Gastrocnemius medialis (tissue), 4 donors: ENCODE measurements at regions of chr21 and their contacts with region 1.

Region 1: GRCh38 chr21:42818328-42818749 is 61.0 kb downstream of the WDR4 start:
- DNase-seq: peak in 1 of 2 donors; percentile 37
- ATAC-seq: no peak
- H3K4me3 ChIP-seq: no peak overlapping the region
- H3K27ac ChIP-seq: no peak overlapping the region
- H3K4me1 ChIP-seq: no peaks in the 10 kb centered on the region
- H3K27me3 ChIP-seq: peaks cover 0 to 4% (median 0%) of the 10 kb centered on the region in 3 donors
- CTCF ChIP-seq: peak; percentile 49 to 76 (median 69)
- POLR2A ChIP-seq: no peak

Region 2: GRCh38 chr21:42309753-42310221 is 508.6 kb before region 1 on chr21:
- in situ Hi-C with region 1: loop called in 1 of 4 experiments (anchors 25 kb)
- intact Hi-C with region 1: no loop called
- DNase-seq: no peak
- ATAC-seq: peak; percentile 37 to 62
- H3K4me3 ChIP-seq: no peak overlapping the region
- H3K27ac ChIP-seq: no peak overlapping the region
- H3K4me1 ChIP-seq: peaks cover 0 to 5% of the 10 kb centered on the region in 2 donors
- H3K27me3 ChIP-seq: peaks cover 0 to 21% (median 9%) of the 10 kb centered on the region in 3 donors
- CTCF ChIP-seq: peak; percentile 54 to 82 (median 63)
- POLR2A ChIP-seq: no peak

Region 3: GRCh38 chr21:42593007-42593806 is 225.1 kb before region 1 on chr21:
- in situ Hi-C with region 1: loop called in 2 of 4 experiments (anchors 5 to 25 kb)
- intact Hi-C with region 1: no loop called
- DNase-seq: peak; percentile 17 to 28
- ATAC-seq: peak in 1 of 2 donors; percentile 42
- H3K4me3 ChIP-seq: peak overlapping the region in 2 of 4 donors; percentile 9 to 36
- H3K27ac ChIP-seq: no peak overlapping the region
- H3K4me1 ChIP-seq: no peaks in the 10 kb centered on the region
- H3K27me3 ChIP-seq: peaks cover 0 to 18% (median 7%) of the 10 kb centered on the region in 3 donors
- CTCF ChIP-seq: peak in 4 of 5 experiments; percentile 26 to 64 (median 53)
- POLR2A ChIP-seq: no peak

Region 4: GRCh38 chr21:42614811-42615659 is 203.3 kb before region 1 on chr21:
- in situ Hi-C with region 1: loop called in 1 of 4 experiments (anchors 25 kb)
- intact Hi-C with region 1: no loop called
- DNase-seq: no peak
- ATAC-seq: no peak
- H3K4me3 ChIP-seq: no peak overlapping the region
- H3K27ac ChIP-seq: no peak overlapping the region
- H3K4me1 ChIP-seq: no peaks in the 10 kb centered on the region
- H3K27me3 ChIP-seq: peaks cover 26 to 32% (median 30%) of the 10 kb centered on the region in 3 donors
- CTCF ChIP-seq: no peak
- POLR2A ChIP-seq: no peak

Region 5: DNA sequence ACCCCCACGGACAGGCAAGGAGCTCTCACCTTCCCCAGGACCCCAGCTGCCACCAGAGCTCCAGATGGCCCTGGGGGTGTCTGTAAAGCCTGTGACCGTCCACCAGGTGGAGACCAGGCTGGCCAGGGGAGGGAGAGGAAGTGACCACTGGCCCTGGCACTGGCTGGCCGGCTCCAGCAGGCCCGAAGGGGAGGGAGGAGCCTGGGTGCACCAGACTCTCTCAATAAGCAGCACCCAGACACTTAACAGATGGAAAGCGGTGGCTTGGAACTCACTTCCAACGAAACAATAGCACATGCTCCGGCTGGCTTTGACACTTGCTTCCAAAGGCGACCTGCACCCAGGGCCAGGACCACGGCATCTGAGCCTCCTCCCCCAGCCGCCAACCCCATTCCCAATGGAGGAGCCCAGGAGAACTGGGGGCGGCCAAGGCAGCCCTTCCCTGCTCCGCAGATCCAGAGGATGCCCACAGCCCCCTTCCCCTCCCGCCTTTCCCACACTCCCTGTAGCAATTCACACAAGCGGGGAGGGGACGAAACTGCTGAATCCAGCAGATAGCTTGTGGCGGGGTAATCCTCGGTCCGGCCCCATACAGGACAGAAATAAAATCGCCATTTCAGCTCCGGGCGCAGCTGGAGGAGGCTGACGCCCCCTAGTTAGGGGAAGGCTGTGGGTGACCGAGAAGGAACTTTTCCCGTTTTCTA is 165.7 kb before region 1 on chr21:
- in situ Hi-C with region 1: no loop called
- intact Hi-C with region 1: loop called (anchors 2 kb)
- DNase-seq: peak; percentile 25 to 41
- ATAC-seq: peak; percentile 41 to 55
- H3K4me3 ChIP-seq: peak overlapping the region; percentile 42 to 65 (median 54)
- H3K27ac ChIP-seq: peak overlapping the region in 3 of 4 donors; percentile 67 to 69 (median 68)
- H3K4me1 ChIP-seq: peaks cover 6 to 11% of the 10 kb centered on the region in 2 donors
- H3K27me3 ChIP-seq: peaks cover 27 to 41% (median 32%) of the 10 kb centered on the region in 3 donors
- CTCF ChIP-seq: peak; percentile 12 to 49 (median 47)
- POLR2A ChIP-seq: no peak